ENCODE measurements at regions of chr11 and their contacts with region 1.

Region 1: DNA sequence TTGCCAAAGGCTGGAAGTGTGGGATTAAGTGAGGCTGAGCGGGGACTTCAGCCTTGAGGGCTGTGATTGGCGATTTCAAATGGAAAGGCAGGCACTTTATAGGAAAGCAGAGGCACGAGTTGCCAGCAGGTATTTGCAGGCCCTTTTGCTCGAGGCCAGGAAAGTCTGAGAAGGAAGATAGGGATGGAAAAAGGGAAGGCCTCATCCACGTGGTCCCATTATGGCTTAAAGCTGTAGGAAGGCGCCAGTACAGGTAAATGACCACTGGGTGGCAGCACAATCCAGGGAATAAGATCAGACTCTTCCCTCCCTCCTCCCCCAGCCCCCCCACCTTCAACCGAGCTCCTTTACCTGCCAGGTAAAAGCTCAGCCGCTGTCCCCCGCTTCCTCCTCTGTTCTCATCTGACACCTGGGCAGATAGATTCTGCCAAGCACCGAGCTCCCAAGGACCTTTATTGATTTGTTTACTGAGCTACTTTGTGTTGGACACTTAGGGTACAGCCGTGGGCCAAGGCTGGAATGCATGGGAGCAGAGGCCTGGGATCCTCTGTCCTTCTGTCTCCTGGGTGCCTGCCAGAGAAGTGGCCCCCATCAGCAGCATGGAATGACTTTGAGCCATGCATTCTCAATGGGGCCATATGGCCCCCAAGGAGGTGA is 7.5 kb downstream of the P2RX3 start:
- DNase-seq: peak; percentile 80
- H3K4me3 ChIP-seq: no peak overlapping the region
- H3K27ac ChIP-seq: no peak overlapping the region
- H3K4me1 ChIP-seq: peaks cover 0 to 7% (median 5%) of the 10 kb centered on the region in 4 donors
- H3K27me3 ChIP-seq: peaks cover 0 to 4% (median 0%) of the 10 kb centered on the region in 3 donors
- CTCF ChIP-seq: peak in 3 of 4 experiments; percentile 31 to 84 (median 46)
- EP300 ChIP-seq: no peak
- POLR2A ChIP-seq: no peak

Region 2: DNA sequence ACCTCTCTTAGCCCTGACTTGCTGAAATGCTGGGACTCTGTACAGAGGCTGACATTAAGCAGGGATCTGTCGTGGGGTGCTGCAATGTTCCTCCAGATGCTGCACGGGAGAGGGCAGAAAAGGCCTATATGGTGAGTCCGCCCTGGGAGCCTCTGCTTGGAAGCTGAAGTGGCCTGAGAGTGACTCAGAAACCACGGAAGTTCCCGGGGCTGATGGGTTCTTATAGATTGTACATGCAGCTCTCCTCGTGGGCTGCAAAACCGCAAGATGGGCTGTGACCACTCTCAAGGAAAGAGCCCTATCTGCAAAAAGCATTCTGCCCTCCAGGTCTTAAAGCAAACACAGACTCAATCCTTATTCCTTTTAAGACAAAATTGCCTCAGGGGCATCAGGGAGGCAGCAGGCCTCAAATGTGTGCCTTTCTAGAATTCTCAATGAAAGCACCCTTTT is 87.1 kb after region 1 on chr11:
- intact Hi-C with region 1: loop called (anchors 5 kb)
- DNase-seq: no peak
- H3K4me3 ChIP-seq: no peak overlapping the region
- H3K27ac ChIP-seq: no peak overlapping the region
- H3K4me1 ChIP-seq: peaks cover 0 to 25% (median 19%) of the 10 kb centered on the region in 4 donors
- H3K27me3 ChIP-seq: no peaks in the 10 kb centered on the region
- CTCF ChIP-seq: no peak
- EP300 ChIP-seq: no peak
- POLR2A ChIP-seq: no peak